ENCODE measurements at regions of chr1 and their contacts with region 1.

Region 1: GRCh38 chr1:212782422-212783154 is 9.0 kb downstream of the NSL1 start:
- DNase-seq: no peak
- CTCF ChIP-seq: peak; percentile 54

Region 2: GRCh38 chr1:212671342-212672031 is 111.1 kb before region 1 on chr1:
- in situ Hi-C with region 1: loop called (anchors 10 kb)
- DNase-seq: no peak
- CTCF ChIP-seq: no peak